Heart left ventricle (tissue), 16 donors: ENCODE measurements at regions of chr14 and their contacts with region 1.

Region 1: GRCh38 chr14:92973261-92973797 is 50.4 kb downstream of the CHGA start:
- DNase-seq: peak; percentile 79 to 89 (median 84)
- ATAC-seq: peak; percentile 91 to 95 (median 92)
- H3K4me3 ChIP-seq: no peak overlapping the region
- H3K27ac ChIP-seq: peak overlapping the region; percentile 10 to 90 (median 80)
- H3K4me1 ChIP-seq: peaks cover 0 to 45% (median 19%) of the 10 kb centered on the region in 12 donors
- H3K27me3 ChIP-seq: no peaks in the 10 kb centered on the region
- CTCF ChIP-seq: peak; percentile 52 to 87 (median 72)
- POLR2A ChIP-seq: no peak

Region 2: GRCh38 chr14:92481386-92481785 is 491.9 kb before region 1 on chr14:
- intact Hi-C with region 1: no loop called
- DNase-seq: peak in 1 of 5 donors; percentile 14
- ATAC-seq: no peak
- H3K4me3 ChIP-seq: no peak overlapping the region
- H3K27ac ChIP-seq: no peak overlapping the region
- H3K4me1 ChIP-seq: peaks cover 0 to 17% (median 9%) of the 10 kb centered on the region in 12 donors
- H3K27me3 ChIP-seq: no peaks in the 10 kb centered on the region
- CTCF ChIP-seq: peak in 5 of 12 donors; percentile 12 to 39 (median 26)
- POLR2A ChIP-seq: no peak

Region 3: DNA sequence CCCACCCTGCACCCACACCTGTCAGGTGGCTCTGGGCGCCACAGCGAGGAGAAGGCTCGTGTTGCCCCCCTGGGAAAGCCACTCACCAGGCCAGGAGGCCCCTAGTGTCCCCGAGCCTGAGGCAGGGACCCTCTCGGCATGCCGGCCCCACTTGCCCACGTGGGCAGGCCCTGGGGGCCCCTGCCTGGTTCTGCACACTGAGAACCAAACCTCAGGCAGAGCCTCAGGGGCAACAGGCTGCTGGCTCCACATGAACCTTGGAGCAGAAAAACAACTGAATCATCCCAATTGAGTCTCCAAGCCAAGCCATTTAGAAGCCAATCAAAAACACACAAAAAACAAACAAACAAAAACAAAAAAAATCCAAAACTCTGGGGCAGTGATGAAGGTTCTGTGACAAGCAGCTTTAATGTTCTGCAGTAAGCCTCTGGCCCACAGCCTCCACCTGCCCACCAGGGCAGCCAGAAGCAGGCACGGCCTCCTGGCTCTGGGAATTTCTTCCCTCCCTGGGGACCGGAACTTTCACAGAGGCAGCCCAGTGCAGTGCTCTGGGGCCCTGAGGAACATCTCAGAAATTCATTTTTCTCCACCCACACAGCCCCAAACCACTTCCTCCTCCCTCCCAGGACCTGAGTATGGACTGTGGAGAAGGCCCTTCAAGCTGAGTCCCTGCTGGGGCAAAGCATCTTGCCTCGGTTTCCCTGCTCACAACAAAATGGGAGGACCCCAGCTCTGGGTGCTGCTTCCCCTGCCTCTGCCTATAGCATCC is 39.8 kb after region 1 on chr14:
- intact Hi-C with region 1: loop called in 1 of 10 experiments (anchors 5 kb)
- DNase-seq: no peak
- ATAC-seq: peak in 1 of 4 donors; percentile 13
- H3K4me3 ChIP-seq: no peak overlapping the region
- H3K27ac ChIP-seq: peak overlapping the region in 5 of 12 donors; percentile 6 to 47 (median 30)
- H3K4me1 ChIP-seq: peaks cover 10 to 100% (median 84%) of the 10 kb centered on the region in 12 donors
- H3K27me3 ChIP-seq: no peaks in the 10 kb centered on the region
- CTCF ChIP-seq: no peak
- POLR2A ChIP-seq: no peak

Region 4: GRCh38 chr14:93033983-93034670 is 60.8 kb after region 1 on chr14:
- intact Hi-C with region 1: loop called in 1 of 10 experiments (anchors 5 kb)
- DNase-seq: no peak
- ATAC-seq: peak in 3 of 4 donors; percentile 10 to 54 (median 36)
- H3K4me3 ChIP-seq: no peak overlapping the region
- H3K27ac ChIP-seq: peak overlapping the region in 5 of 12 donors; percentile 2 to 90 (median 29)
- H3K4me1 ChIP-seq: peaks cover 13 to 75% (median 50%) of the 10 kb centered on the region in 12 donors
- H3K27me3 ChIP-seq: no peaks in the 10 kb centered on the region
- CTCF ChIP-seq: peak in 10 of 12 donors; percentile 35 to 63 (median 50)
- POLR2A ChIP-seq: no peak

Region 5: GRCh38 chr14:93132470-93133065 is 159.2 kb after region 1 on chr14:
- intact Hi-C with region 1: loop called in 6 of 10 experiments (anchors 1 to 5 kb)
- DNase-seq: peak in 3 of 5 donors; percentile 45 to 54 (median 46)
- ATAC-seq: peak; percentile 46 to 88 (median 76)
- H3K4me3 ChIP-seq: no peak overlapping the region
- H3K27ac ChIP-seq: peak overlapping the region in 6 of 12 donors; percentile 10 to 49 (median 34)
- H3K4me1 ChIP-seq: peaks cover 0 to 24% (median 0%) of the 10 kb centered on the region in 12 donors
- H3K27me3 ChIP-seq: no peaks in the 10 kb centered on the region
- CTCF ChIP-seq: peak; percentile 28 to 61 (median 51)
- POLR2A ChIP-seq: no peak